AG04450 (cell line): ENCODE measurements at regions of chr10 and their contacts with region 1.

Region 1: GRCh38 chr10:68156373-68157185 is 47.3 kb downstream of the MYPN start:
- DNase-seq: no peak
- H3K4me3 ChIP-seq: no peak overlapping the region
- H3K27ac ChIP-seq: no peak overlapping the region
- H3K27me3 ChIP-seq: no peaks in the 10 kb centered on the region
- CTCF ChIP-seq: peak; percentile 81

Region 2: DNA sequence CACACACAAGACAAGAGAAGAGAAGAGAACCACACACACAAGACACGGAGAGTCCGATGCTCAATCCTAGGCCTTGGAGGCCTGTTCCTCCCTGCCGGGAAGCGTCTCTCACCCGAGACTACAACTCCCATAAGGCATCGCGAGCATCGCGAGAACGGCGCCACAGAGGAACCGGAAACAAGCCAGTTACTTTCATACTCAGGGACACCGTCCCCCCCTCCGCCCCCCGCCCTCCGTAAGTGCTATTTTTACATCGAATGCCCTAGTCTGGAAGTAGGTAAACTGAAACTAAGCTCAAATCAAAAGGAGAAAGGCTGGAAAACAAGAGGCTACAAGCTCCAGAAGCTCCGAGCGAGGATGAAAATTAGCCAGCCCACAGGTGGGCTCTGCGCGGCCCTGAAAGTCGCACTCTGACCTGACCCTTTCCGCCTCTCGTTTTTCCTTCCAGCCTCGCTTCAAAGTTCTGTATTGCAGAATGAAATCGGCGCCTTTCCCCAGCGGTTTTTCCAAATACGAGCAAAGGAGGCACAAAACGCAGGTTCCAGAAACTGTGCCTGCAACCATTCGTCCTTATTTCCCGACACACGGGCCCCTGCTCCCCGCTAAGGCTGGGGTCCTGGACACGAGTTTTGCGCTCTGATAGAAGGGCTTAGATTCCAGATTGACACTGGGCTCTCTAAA is 307.1 kb before region 1 on chr10:
- CTCF ChIA-PET with region 1: interaction called, 36 read pairs
- POLR2A ChIA-PET with region 1: no interaction called
- DNase-seq: peak; percentile 87
- H3K4me3 ChIP-seq: peak overlapping the region; percentile 79
- H3K27ac ChIP-seq: peak overlapping the region; percentile 96
- H3K27me3 ChIP-seq: no peaks in the 10 kb centered on the region
- CTCF ChIP-seq: no peak

Region 3: GRCh38 chr10:68082872-68083271 is 73.7 kb before region 1 on chr10:
- CTCF ChIA-PET with region 1: interaction called, 197 read pairs
- POLR2A ChIA-PET with region 1: interaction called, 5 read pairs
- DNase-seq: no peak
- H3K4me3 ChIP-seq: no peak overlapping the region
- H3K27ac ChIP-seq: no peak overlapping the region
- H3K27me3 ChIP-seq: no peaks in the 10 kb centered on the region
- CTCF ChIP-seq: peak; percentile 62

Region 4: GRCh38 chr10:68166871-68167585 is 10.4 kb after region 1 on chr10:
- CTCF ChIA-PET with region 1: interaction called, 34 read pairs
- POLR2A ChIA-PET with region 1: no interaction called
- DNase-seq: no peak
- H3K4me3 ChIP-seq: no peak overlapping the region
- H3K27ac ChIP-seq: no peak overlapping the region
- H3K27me3 ChIP-seq: no peaks in the 10 kb centered on the region
- CTCF ChIP-seq: no peak

Region 5: GRCh38 chr10:68184546-68184945 is 28.0 kb after region 1 on chr10:
- CTCF ChIA-PET with region 1: interaction called, 13 read pairs
- POLR2A ChIA-PET with region 1: no interaction called
- DNase-seq: no peak
- H3K4me3 ChIP-seq: no peak overlapping the region
- H3K27ac ChIP-seq: no peak overlapping the region
- H3K27me3 ChIP-seq: no peaks in the 10 kb centered on the region
- CTCF ChIP-seq: no peak

Region 6: GRCh38 chr10:68231817-68232251 is 75.3 kb after region 1 on chr10 and contains the start of gene ATOH7:
- CTCF ChIA-PET with region 1: no interaction called
- POLR2A ChIA-PET with region 1: no interaction called
- DNase-seq: no peak
- H3K4me3 ChIP-seq: peak within 1 kb of the TSS; percentile 79
- H3K27ac ChIP-seq: peak within 1 kb of the TSS; percentile 88
- H3K27me3 ChIP-seq: peaks cover 15% of the 10 kb centered on the region
- CTCF ChIP-seq: no peak
- polyA plus RNA-seq, gene ATOH7: 0.06 TPM in 1 of 2 replicates, not detected in the other